Naive thymus-derived CD4-positive, alpha-beta T cell (primary cell): ENCODE measurements at regions of chr19 and their contacts with region 1.

Region 1: DNA sequence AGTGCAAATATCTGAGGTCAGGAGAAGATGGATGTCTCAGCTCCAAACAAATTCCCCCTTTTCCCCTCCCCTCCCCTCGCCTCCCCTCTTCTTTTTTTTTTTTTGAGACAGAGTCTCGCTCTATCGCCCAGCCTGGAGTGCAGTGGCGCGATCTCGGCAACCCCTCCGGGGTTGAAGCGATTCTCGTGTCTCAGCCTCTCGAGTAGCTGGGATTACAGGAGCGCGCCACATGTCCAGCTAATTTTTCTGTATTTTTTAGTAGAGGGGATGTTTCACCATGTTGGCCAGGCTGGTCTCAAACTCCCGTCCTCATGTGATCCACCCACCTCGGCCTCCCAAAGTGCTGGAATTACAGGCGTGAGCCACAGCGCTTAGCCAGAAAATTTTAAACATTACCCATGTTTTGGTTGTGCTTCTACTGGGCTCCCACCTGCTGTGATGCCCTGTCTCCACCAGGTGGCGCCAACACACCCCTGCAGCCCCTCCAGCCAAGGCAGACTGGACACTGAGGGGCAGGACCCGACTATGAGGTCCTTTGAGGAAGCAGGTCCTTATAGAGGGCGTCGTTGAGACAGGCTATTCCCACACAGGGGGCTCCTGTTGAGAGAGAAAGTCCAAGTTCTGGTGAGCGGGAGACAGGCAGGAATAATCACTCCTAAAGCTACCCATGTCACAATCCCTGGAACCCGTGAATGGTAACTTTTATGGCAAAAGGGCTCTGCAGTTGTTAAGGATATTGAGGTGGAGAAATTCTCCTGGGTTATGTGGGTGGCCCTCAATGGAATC is 6.3 kb downstream of the ERICH4 start:
- DNase-seq: peak; percentile 48 to 78 (median 67)
- ATAC-seq: peak; percentile 97
- H3K4me3 ChIP-seq: peak overlapping the region; percentile 41
- H3K4me3 Mint-ChIP-seq: peak overlapping the region; percentile 69 to 86 (median 80)
- H3K27ac ChIP-seq: no peak overlapping the region
- H3K27ac Mint-ChIP-seq: peak overlapping the region in 5 of 9 donors; percentile 59 to 80 (median 67)
- H3K4me1 ChIP-seq: peaks cover 0 to 10% of the 10 kb centered on the region in 2 donors
- H3K4me1 Mint-ChIP-seq: peaks cover 7 to 32% (median 13%) of the 10 kb centered on the region in 7 donors
- H3K27me3 ChIP-seq: no peaks in the 10 kb centered on the region
- H3K27me3 Mint-ChIP-seq: peaks cover 0 to 3% (median 0%) of the 10 kb centered on the region in 5 donors

Region 2: GRCh38 chr19:41341669-41342490 is 107.4 kb before region 1 on chr19:
- CTCF ChIA-PET with region 1: no interaction called
- POLR2A ChIA-PET with region 1: no interaction called
- intact Hi-C with region 1: no loop called
- DNase-seq: no peak
- ATAC-seq: peak; percentile 60
- H3K4me3 ChIP-seq: no peak overlapping the region
- H3K4me3 Mint-ChIP-seq: peak overlapping the region in 9 of 10 donors; percentile 32 to 72 (median 63)
- H3K27ac ChIP-seq: no peak overlapping the region
- H3K27ac Mint-ChIP-seq: peak overlapping the region in 8 of 9 donors; percentile 24 to 84 (median 70)
- H3K4me1 ChIP-seq: peaks cover 27 to 35% of the 10 kb centered on the region in 2 donors
- H3K4me1 Mint-ChIP-seq: peaks cover 12 to 61% (median 42%) of the 10 kb centered on the region in 7 donors
- H3K27me3 ChIP-seq: no peaks in the 10 kb centered on the region
- H3K27me3 Mint-ChIP-seq: no peaks in the 10 kb centered on the region

Region 3: DNA sequence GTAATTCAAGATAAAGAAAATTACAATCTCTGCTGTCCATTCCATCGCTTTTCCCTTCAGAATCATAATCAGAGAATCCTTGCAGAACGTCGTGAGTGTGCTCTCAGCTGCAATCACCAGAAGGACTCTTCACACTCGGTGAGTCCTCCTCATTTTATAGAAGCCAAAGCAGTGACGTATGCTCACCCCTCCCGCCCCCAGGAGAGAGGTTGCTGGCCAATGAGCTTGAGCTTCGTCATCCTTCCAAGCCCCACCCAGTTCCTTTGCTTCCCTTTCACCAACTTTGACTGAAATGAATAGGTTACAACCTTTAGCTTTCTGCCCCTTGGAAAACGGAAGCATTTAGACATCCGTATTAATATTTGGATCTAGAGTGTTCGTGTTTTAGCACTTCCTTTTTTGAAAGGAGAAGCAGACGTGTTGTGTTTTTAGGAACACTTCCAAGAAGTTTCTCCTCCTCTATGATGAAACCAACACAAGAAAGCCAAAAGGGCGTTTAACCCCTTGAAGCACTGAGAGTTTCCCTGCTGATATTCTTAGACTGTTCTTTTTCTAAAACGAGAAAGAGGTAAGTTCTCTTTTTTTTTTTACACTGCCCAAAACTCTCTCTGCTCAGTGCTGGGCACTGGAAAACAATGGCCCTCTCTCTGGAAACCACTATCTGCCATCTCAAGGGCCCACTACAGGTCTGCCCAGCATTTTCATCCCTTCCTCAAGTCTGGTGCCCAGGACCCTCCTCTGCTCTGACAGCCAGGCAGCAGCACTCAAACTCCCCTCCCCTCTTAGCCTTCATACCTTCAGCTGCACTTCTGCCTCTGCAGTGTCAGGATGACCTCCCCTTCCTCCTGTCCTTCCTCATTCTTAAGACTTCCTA is 82.4 kb after region 1 on chr19:
- CTCF ChIA-PET with region 1: interaction called, 12 read pairs
- POLR2A ChIA-PET with region 1: interaction called, 3 read pairs
- intact Hi-C with region 1: no loop called
- DNase-seq: peak; percentile 59 to 95 (median 93)
- ATAC-seq: peak; percentile 95
- H3K4me3 ChIP-seq: peak overlapping the region; percentile 46
- H3K4me3 Mint-ChIP-seq: peak overlapping the region; percentile 77 to 98 (median 84)
- H3K27ac ChIP-seq: peak overlapping the region; percentile 75
- H3K27ac Mint-ChIP-seq: peak overlapping the region; percentile 83 to 98 (median 92)
- H3K4me1 ChIP-seq: peaks cover 32 to 46% of the 10 kb centered on the region in 2 donors
- H3K4me1 Mint-ChIP-seq: peaks cover 50 to 70% (median 64%) of the 10 kb centered on the region in 7 donors
- H3K27me3 ChIP-seq: no peaks in the 10 kb centered on the region
- H3K27me3 Mint-ChIP-seq: peaks cover 0 to 7% (median 0%) of the 10 kb centered on the region in 5 donors

Region 4: DNA sequence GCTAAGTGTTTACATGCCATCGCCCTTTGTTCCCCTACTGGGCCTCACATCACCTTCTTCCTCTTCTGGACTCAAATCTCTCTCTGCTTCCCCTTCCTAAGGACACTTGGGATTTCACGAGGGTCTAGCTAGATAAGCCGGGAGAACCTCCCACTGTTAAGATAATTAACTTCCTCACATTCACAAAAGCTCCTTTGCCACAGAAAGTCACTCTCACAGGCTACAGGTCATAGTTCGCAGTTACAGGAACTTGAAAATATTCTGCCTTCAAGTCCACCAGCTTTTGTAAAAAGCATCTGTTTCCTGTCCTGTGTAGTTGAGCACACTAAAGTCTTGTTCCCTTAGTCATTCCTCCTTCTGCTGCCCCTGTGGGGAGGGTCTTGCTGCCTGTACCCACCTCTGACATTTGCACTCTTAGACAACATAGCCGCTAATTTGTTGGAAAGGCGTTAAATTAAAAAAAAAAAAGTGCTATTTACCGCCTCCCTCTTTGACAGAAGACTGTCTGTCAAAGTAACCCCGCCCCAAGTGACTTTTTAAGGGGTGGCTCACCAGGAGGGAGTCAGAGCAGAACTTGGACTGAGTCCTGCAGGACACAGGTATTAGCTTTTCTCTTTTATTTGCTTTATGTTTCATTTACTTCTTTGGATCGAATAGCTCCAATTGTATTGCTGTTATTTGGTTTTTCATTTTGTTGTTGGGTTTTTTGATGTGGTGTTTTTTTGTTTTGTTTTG is 99.8 kb after region 1 on chr19:
- CTCF ChIA-PET with region 1: interaction called, 14 read pairs
- POLR2A ChIA-PET with region 1: no interaction called
- intact Hi-C with region 1: no loop called
- DNase-seq: peak in 8 of 9 donors; percentile 68 to 82 (median 78)
- ATAC-seq: peak; percentile 82
- H3K4me3 ChIP-seq: peak overlapping the region; percentile 77
- H3K4me3 Mint-ChIP-seq: peak overlapping the region; percentile 91 to 100 (median 98)
- H3K27ac ChIP-seq: peak overlapping the region; percentile 88
- H3K27ac Mint-ChIP-seq: peak overlapping the region; percentile 92 to 97 (median 96)
- H3K4me1 ChIP-seq: peaks cover 43 to 53% of the 10 kb centered on the region in 2 donors
- H3K4me1 Mint-ChIP-seq: peaks cover 58 to 72% (median 61%) of the 10 kb centered on the region in 7 donors
- H3K27me3 ChIP-seq: no peaks in the 10 kb centered on the region
- H3K27me3 Mint-ChIP-seq: no peaks in the 10 kb centered on the region

Region 5: DNA sequence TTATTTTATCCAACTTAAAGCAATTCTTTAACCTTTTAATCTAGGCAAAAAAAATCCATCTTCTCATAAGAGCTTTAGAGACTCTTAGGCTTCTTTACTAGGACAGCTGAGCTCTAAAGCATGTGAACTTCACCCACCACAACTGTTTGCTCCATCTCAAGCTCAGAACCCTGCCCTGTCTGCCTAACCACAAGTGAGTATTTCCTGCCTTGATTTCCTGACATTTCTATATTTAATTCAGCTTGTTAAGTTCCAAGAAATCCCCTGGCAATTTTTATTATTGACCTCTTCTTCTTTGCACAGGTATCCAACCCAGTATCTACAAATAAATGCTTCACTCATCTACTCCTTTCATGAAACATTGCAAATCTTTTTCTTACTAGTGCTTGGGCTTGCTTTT is 105.6 kb after region 1 on chr19:
- CTCF ChIA-PET with region 1: interaction called, 14 read pairs
- POLR2A ChIA-PET with region 1: interaction called, 3 read pairs
- intact Hi-C with region 1: no loop called
- DNase-seq: peak in 7 of 9 donors; percentile 62 to 78 (median 73)
- ATAC-seq: peak; percentile 88
- H3K4me3 ChIP-seq: peak overlapping the region; percentile 77
- H3K4me3 Mint-ChIP-seq: peak overlapping the region; percentile 39 to 100 (median 97)
- H3K27ac ChIP-seq: peak overlapping the region; percentile 88
- H3K27ac Mint-ChIP-seq: peak overlapping the region; percentile 25 to 97 (median 95)
- H3K4me1 ChIP-seq: peaks cover 50 to 65% of the 10 kb centered on the region in 2 donors
- H3K4me1 Mint-ChIP-seq: peaks cover 43 to 76% (median 69%) of the 10 kb centered on the region in 7 donors
- H3K27me3 ChIP-seq: no peaks in the 10 kb centered on the region
- H3K27me3 Mint-ChIP-seq: no peaks in the 10 kb centered on the region